A673 (cell line): ENCODE measurements at regions of chr5 and their contacts with region 1.

Region 1: GRCh38 chr5:136037001-136037705 is 8.4 kb downstream of the TGFBI start:
- DNase-seq: peak; percentile 99
- H3K4me3 ChIP-seq: no peak overlapping the region
- H3K27ac ChIP-seq: peak overlapping the region; percentile 66
- H3K4me1 ChIP-seq: peaks cover 75% of the 10 kb centered on the region
- H3K27me3 ChIP-seq: no peaks in the 10 kb centered on the region
- CTCF ChIP-seq: no peak

Region 2: DNA sequence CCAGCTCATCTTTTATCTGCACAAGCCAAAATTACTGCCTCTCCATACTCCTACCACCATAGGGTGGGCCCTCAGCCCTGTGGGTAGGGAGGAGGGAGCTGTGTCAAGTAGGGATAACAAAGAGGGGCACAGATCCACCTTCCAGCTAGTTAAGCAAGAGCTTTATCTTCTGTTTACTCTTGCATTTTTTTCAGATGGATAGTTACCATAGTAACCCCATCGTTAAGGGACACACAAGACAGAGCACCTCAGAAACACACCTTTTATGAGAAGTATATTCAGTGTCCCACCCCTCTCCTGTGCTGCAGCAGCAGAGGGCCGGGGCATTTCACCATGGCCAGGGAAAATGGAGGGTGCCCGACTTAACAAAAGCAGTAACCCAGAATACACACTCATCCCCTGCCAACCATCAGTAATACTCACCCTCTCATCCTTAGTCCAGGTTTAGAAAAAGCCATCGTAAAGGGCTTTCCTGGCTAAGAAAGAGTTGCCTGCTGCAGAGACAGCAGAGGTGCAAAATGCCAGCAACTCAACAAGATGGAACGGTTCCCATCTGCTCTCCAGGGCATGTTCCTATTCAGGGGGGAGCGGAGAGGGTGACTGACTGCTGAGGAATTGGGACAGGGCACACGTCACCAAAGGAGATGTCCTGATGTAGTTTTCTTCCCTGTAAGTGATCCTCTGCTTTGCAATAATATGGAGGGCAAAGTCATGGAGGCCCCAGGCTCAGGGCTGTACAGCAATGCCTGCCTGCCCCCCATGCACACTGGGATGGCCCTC is 663.2 kb before region 1 on chr5:
- CTCF ChIA-PET with region 1: no interaction called
- POLR2A ChIA-PET with region 1: no interaction called
- intact Hi-C with region 1: no loop called
- DNase-seq: no peak
- H3K4me3 ChIP-seq: no peak overlapping the region
- H3K27ac ChIP-seq: no peak overlapping the region
- H3K4me1 ChIP-seq: no peaks in the 10 kb centered on the region
- H3K27me3 ChIP-seq: no peaks in the 10 kb centered on the region
- CTCF ChIP-seq: no peak

Region 3: GRCh38 chr5:136011414-136012001 is 25.6 kb before region 1 on chr5:
- CTCF ChIA-PET with region 1: no interaction called
- POLR2A ChIA-PET with region 1: no interaction called
- intact Hi-C with region 1: loop called (anchors 1 kb)
- DNase-seq: peak; percentile 92
- H3K4me3 ChIP-seq: no peak overlapping the region
- H3K27ac ChIP-seq: peak overlapping the region; percentile 64
- H3K4me1 ChIP-seq: peaks cover 70% of the 10 kb centered on the region
- H3K27me3 ChIP-seq: no peaks in the 10 kb centered on the region
- CTCF ChIP-seq: no peak

Region 4: DNA sequence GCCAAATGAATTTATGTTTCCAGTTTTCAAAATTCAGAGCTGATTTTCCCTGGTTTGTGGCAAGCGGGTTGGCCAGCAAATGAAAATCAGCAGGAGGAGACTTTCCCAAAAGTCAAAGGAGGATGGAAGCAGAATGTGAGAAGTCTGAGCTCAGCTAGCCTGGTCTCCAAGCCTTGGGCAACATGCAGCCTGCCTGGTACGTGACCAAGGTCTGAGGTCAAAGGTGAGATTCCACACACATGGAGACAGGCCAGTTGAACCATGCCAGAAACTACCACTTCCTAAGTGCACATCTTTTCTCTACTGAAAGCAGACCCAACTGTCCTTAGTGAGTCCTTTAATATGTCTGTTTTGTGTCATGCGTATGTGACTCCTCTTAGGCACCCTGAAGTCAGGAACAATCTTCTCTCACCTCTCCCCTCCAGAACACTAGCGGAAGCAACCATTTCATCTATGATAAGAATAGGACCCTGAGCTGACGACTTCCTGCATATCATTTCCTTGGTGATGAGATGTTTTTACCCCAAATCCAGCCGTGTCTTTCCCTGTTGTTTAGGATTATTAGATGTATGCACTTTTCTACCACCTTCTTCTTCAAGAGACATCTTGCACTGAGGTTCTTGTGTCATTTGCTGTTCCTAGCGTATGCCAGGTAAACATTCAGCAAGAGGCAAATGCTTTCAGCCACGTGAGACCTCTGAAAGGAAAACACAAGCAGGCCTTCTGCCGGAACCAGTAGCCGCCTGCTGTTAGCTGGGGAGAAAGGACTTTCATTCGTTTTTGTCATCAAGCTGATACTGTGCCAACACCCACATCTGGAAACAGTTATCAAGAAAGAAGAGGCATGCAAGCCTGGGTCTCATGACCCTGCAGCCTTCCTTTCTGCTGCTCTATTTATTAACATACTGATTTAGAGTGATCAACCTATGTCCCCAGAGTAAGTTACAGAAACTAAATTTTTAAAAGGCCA is 18.1 kb before region 1 on chr5:
- CTCF ChIA-PET with region 1: no interaction called
- POLR2A ChIA-PET with region 1: no interaction called
- intact Hi-C with region 1: loop called (anchors 1 kb)
- DNase-seq: peak; percentile 98
- H3K4me3 ChIP-seq: peak overlapping the region; percentile 3
- H3K27ac ChIP-seq: peak overlapping the region; percentile 78
- H3K4me1 ChIP-seq: peaks cover 54% of the 10 kb centered on the region
- H3K27me3 ChIP-seq: no peaks in the 10 kb centered on the region
- CTCF ChIP-seq: peak; percentile 48